ENCODE measurements at regions of chr11 and their contacts with region 1.

Region 1: GRCh38 chr11:12043959-12044819 is 35.8 kb upstream of the DKK3 start:
- DNase-seq: peak; percentile 72
- CTCF ChIP-seq: peak; percentile 82

Region 2: GRCh38 chr11:11806586-11806985 is 237.6 kb before region 1 on chr11:
- in situ Hi-C with region 1: loop called (anchors 10 kb)
- DNase-seq: no peak
- CTCF ChIP-seq: no peak

Region 3: DNA sequence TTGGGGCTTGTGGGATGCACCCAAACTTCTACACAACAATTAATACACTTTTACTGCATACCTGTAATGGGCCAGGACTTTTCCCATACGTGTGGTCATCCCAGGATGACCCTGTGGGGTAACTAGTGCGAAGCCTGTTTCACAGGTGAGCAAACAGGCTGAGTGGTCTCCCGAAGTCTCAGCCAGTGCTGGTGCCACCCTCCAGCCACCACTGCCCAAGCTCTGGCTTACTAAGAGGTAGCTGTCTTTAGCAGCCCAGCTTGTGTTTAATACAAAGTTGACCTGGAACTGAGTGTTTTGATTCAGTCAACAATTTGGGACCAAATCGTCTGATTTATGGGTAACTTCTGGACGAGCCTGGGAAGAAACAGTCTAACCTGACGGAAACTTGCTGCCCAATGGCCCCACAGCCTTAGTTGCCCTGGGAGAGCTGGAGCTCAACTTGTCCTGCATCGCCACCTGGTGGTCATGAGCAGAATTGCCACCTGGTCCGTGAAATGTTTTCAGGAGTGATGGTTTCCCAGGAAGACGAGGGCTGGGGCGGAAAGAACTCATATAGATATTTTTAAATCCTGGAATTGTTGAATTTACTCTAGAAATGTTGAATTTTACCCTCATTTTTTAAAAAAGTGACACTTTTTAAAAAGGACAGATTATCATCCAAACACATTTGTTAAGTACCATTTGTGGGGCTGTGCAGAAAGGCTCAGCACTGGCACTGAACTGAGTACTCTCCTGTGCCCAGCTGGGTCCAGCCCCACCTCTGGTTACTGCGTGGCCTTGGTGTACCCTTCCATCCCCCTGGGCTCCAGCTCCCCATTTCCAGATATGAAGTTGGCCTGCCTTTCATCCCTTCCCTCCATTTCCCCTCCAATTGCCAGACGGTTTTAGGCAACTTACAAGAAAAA is 237.6 kb after region 1 on chr11:
- in situ Hi-C with region 1: loop called (anchors 10 kb)
- DNase-seq: peak; percentile 86
- CTCF ChIP-seq: peak; percentile 93

Measured in GM13976 (cell line).